ENCODE measurements at regions of chr7 and their contacts with region 1.

Region 1: GRCh38 chr7:148584154-148584827 is 6.3 kb upstream of the C7orf33 start:
- DNase-seq: no peak
- H3K4me3 Mint-ChIP-seq: no peak overlapping the region
- H3K27ac Mint-ChIP-seq: no peak overlapping the region
- H3K4me1 Mint-ChIP-seq: peaks cover 24% of the 10 kb centered on the region
- H3K27me3 Mint-ChIP-seq: peaks cover 8% of the 10 kb centered on the region

Region 2: GRCh38 chr7:148535217-148535616 is 49.1 kb before region 1 on chr7:
- intact Hi-C with region 1: loop called (anchors 1 kb)
- DNase-seq: peak; percentile 13
- H3K4me3 Mint-ChIP-seq: peak overlapping the region; percentile 47
- H3K27ac Mint-ChIP-seq: peak overlapping the region; percentile 81
- H3K4me1 Mint-ChIP-seq: peaks cover 9% of the 10 kb centered on the region
- H3K27me3 Mint-ChIP-seq: no peaks in the 10 kb centered on the region

Region 3: GRCh38 chr7:148624735-148625134 is 40.4 kb after region 1 on chr7:
- intact Hi-C with region 1: loop called (anchors 2 kb)
- DNase-seq: no peak
- H3K4me3 Mint-ChIP-seq: no peak overlapping the region
- H3K27ac Mint-ChIP-seq: no peak overlapping the region
- H3K4me1 Mint-ChIP-seq: peaks cover 40% of the 10 kb centered on the region
- H3K27me3 Mint-ChIP-seq: peaks cover 3% of the 10 kb centered on the region

Region 4: GRCh38 chr7:148914208-148914777 is 330.0 kb after region 1 on chr7:
- intact Hi-C with region 1: loop called (anchors 1 kb)
- DNase-seq: peak; percentile 34
- H3K4me3 Mint-ChIP-seq: peak overlapping the region; percentile 77
- H3K27ac Mint-ChIP-seq: peak overlapping the region; percentile 94
- H3K4me1 Mint-ChIP-seq: peaks cover 63% of the 10 kb centered on the region
- H3K27me3 Mint-ChIP-seq: peaks cover 2% of the 10 kb centered on the region

Measured in activated T-helper 1 cell treated with anti-CD3 and anti-CD28 coated beads, Interleukin-12 subunit alpha, Interleukin-12 subunit beta, Interleukin-2, Interleukin-4 antibody, amounts not matched to agents 30 ng/mL and 10 ng/mL and 1 ng/mL, durations not matched to agents 14 hours and 24 hours and 36 hours (primary cell).